H1 (cell line): ENCODE measurements at regions of chr1 and their contacts with region 1.

Region 1: DNA sequence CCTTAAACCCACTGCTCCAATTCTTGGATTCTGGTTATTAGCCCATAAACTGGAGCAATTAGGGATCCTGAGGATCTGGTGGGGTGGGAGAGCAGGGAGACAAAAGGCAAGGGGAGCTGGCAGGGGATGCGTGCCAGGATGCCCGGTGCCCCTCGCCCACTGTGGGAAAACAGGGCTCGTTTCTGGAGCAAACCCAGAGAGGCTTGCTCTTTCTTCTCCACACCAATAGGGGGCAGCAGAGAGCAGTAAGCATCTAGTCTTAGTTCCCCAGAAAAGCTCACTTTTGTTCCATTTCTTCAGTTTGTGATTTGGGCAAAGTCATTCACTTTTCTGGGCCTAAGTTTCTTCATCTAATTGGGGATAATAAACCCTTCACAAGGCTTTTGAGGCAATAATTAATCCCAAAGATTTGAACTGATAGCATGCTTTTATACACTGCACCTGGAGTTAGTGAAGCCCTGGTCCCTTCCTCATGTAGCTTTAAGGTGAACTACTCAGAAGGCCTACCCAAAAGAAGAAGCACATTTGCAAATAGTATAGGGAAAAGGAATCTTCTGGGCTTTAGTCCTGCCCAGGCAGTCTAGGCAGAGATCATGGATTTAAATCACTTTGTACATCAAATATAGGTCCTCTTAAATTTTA is 160.6 kb upstream of the USP24 start:
- DNase-seq: peak in 1 of 2 experiments; percentile 64
- H3K4me3 ChIP-seq: no peak overlapping the region
- H3K27ac ChIP-seq: no peak overlapping the region
- H3K4me1 ChIP-seq: no peaks in the 10 kb centered on the region
- H3K27me3 ChIP-seq: no peaks in the 10 kb centered on the region; a peak in 1 of 7 replicates
- CTCF ChIP-seq: peak; percentile 47 to 82 (median 63)
- EP300 ChIP-seq: no peak
- POLR2A ChIP-seq: no peak
- RAD21 ChIP-seq: peak; percentile 61 to 67

Region 2: GRCh38 chr1:55284852-55285251 is 90.9 kb before region 1 on chr1:
- CTCF ChIA-PET with region 1: interaction called, 22 read pairs
- POLR2A ChIA-PET with region 1: no interaction called
- DNase-seq: no peak
- H3K4me3 ChIP-seq: no peak overlapping the region
- H3K27ac ChIP-seq: no peak overlapping the region
- H3K4me1 ChIP-seq: no peaks in the 10 kb centered on the region
- H3K27me3 ChIP-seq: no peaks in the 10 kb centered on the region
- CTCF ChIP-seq: peak in 2 of 3 experiments; percentile 46 to 55; a peak in 2 of 4 replicates
- EP300 ChIP-seq: no peak
- POLR2A ChIP-seq: no peak
- RAD21 ChIP-seq: peak; percentile 78 to 79

Region 3: GRCh38 chr1:55353707-55354620 is 21.8 kb before region 1 on chr1:
- CTCF ChIA-PET with region 1: interaction called, 21 read pairs
- POLR2A ChIA-PET with region 1: no interaction called
- DNase-seq: no peak
- H3K4me3 ChIP-seq: no peak overlapping the region
- H3K27ac ChIP-seq: no peak overlapping the region
- H3K4me1 ChIP-seq: no peaks in the 10 kb centered on the region
- H3K27me3 ChIP-seq: no peaks in the 10 kb centered on the region
- CTCF ChIP-seq: no peak
- EP300 ChIP-seq: no peak
- POLR2A ChIP-seq: no peak
- RAD21 ChIP-seq: no peak

Region 4: GRCh38 chr1:55478742-55479141 is 103.0 kb after region 1 on chr1:
- CTCF ChIA-PET with region 1: interaction called, 12 read pairs
- POLR2A ChIA-PET with region 1: no interaction called
- DNase-seq: no peak
- H3K4me3 ChIP-seq: no peak overlapping the region
- H3K27ac ChIP-seq: no peak overlapping the region
- H3K4me1 ChIP-seq: no peaks in the 10 kb centered on the region
- H3K27me3 ChIP-seq: no peaks in the 10 kb centered on the region
- CTCF ChIP-seq: no peak; a peak in 1 of 4 replicates
- EP300 ChIP-seq: no peak
- POLR2A ChIP-seq: no peak
- RAD21 ChIP-seq: peak; percentile 57 to 61

Region 5: GRCh38 chr1:55604749-55605148 is 229.0 kb after region 1 on chr1:
- CTCF ChIA-PET with region 1: no interaction called
- POLR2A ChIA-PET with region 1: no interaction called
- DNase-seq: no peak
- H3K4me3 ChIP-seq: no peak overlapping the region
- H3K27ac ChIP-seq: no peak overlapping the region
- H3K4me1 ChIP-seq: no peaks in the 10 kb centered on the region
- H3K27me3 ChIP-seq: peaks cover 0 to 1% (median 0%) of the 10 kb centered on the region in 4 experiments; a peak in 1 of 7 replicates
- CTCF ChIP-seq: no peak
- EP300 ChIP-seq: no peak
- POLR2A ChIP-seq: no peak
- RAD21 ChIP-seq: no peak

Region 6: DNA sequence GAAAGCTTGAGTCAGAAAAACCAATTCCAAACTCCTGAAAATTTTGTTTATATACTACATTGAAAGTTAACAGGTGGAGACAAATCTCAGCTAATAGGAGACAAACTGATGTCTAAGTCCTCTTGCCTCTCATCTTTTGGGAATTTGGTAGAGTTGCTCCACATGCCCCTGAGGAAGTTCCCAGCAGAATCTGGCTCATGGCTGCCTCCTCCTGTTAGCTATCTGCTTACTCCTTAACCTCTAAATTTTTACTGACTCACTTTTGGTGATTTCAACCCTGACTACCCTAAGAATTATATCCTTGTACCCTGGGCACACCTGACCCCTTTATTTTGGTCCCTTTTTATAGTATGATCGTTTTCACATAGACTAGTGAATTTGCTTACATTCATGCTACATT is 473.2 kb after region 1 on chr1:
- CTCF ChIA-PET with region 1: interaction called, 15 read pairs
- POLR2A ChIA-PET with region 1: no interaction called
- DNase-seq: peak in 1 of 2 experiments; percentile 21
- H3K4me3 ChIP-seq: no peak overlapping the region
- H3K27ac ChIP-seq: no peak overlapping the region
- H3K4me1 ChIP-seq: no peaks in the 10 kb centered on the region
- H3K27me3 ChIP-seq: no peaks in the 10 kb centered on the region
- CTCF ChIP-seq: peak; percentile 24 to 65 (median 56)
- EP300 ChIP-seq: no peak
- POLR2A ChIP-seq: no peak
- RAD21 ChIP-seq: peak; percentile 77 to 84

Region 7: DNA sequence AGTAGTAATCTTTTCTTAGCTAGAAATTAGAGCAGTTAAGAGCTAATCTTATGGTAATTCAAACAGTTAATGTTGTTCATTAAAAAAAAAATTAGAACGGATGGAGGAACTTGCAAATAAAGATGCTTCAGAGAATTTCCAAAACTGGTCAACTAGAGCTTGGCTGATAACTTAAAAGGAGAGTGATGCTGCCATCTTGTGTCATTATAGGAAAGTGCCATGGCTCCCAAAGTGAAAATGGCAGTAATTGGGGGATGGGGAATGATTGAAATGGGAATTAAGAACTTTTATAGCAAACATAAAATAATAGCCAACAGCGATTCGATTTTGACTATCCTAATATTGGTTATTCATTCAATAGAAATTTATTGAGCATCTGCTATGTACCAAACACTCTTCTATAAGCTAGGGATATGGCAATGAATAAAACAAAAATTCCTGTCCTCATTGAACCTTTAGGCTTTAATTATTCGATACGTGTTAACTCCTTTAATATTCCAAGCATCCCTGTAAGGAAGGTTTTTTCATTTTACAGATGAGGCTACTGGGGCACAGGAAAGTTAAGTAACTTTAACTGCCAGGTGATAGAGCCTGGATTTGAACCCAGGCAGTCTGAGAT is 1209.3 kb after region 1 on chr1:
- CTCF ChIA-PET with region 1: interaction called, 13 read pairs
- POLR2A ChIA-PET with region 1: no interaction called
- DNase-seq: no peak
- H3K4me3 ChIP-seq: no peak overlapping the region
- H3K27ac ChIP-seq: no peak overlapping the region
- H3K4me1 ChIP-seq: peaks cover 0 to 6% (median 0%) of the 10 kb centered on the region in 4 experiments; a peak in 3 of 7 replicates
- H3K27me3 ChIP-seq: no peaks in the 10 kb centered on the region
- CTCF ChIP-seq: peak in 2 of 3 experiments; percentile 72 to 79; a peak in 3 of 4 replicates
- EP300 ChIP-seq: 0 out of 3 replicates have a peak, but pooled peaks of 1 of the 2 experiments have one; percentile 19
- POLR2A ChIP-seq: no peak
- RAD21 ChIP-seq: peak; percentile 95 to 96